GM13976 (cell line): ENCODE measurements at regions of chr3 and their contacts with region 1.

Region 1: GRCh38 chr3:183904833-183905780 is 20.4 kb upstream of the PARL start:
- DNase-seq: no peak
- CTCF ChIP-seq: no peak

Region 2: DNA sequence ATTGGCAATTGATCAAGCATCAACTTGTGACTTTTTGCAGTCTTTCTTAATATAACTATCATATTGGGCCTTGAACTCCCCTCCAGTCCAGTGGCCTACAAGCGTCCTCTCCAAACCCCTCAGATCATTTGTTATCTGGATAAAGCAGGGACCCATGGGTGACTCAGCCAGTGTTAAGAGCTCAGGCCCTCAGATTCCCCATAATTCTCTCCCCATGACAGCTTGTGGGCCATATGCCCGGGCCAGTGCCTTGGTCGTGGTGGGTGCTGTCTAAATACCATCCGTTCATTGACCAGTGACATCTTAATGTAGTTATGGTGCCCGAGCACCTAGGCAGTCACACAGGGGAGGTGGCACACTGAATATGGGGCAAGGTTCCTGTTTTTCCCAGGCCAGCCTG is 494.8 kb before region 1 on chr3:
- in situ Hi-C with region 1: no loop called
- DNase-seq: no peak
- CTCF ChIP-seq: no peak

Region 3: GRCh38 chr3:184017672-184018423 is 112.7 kb after region 1 on chr3 and contains the start of gene ABCC5:
- in situ Hi-C with region 1: loop called (anchors 10 kb)
- DNase-seq: peak; percentile 96
- CTCF ChIP-seq: peak; percentile 33